HCT116 (cell line): ENCODE measurements at regions of chr1 and their contacts with region 1.

Region 1: DNA sequence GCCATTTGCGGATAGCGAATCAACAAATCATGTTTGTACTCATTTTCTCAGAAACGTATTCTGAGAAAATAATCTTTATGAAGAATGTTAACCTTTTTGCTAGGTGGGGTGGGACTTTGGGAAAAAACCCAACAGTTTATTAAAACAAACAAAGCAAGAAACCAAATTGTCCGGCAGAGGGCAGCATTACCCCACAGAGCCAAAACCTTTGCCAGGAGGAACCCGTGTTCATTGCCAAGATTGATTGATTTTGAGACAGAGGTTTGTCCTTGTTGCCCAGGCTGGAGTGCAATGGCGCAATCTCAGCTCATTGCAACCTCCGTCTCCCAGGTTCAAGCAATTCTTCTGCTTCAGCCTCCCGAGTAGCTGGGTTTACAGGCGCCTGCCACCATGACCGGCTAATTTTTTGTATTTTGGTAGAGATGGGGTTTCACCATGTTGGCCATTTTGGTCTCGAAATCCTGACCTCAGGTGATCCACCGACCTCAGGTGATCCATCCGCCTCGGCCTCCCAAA is 70.8 kb upstream of the RHOU start:
- DNase-seq: peak; percentile 85
- ATAC-seq: peak; percentile 75
- H3K4me3 ChIP-seq: peak overlapping the region; percentile 37 to 55
- H3K27ac ChIP-seq: peak overlapping the region; percentile 76; the same call in 1 of the 2 replicates
- H3K4me1 ChIP-seq: peaks cover 6 to 17% of the 10 kb centered on the region in 2 experiments; a peak in 3 of 4 replicates
- H3K27me3 ChIP-seq: no peaks in the 10 kb centered on the region
- CTCF ChIP-seq: peak; percentile 70 to 91 (median 79)
- POLR2A ChIP-seq: no peak
- RAD21 ChIP-seq: peak; percentile 98

Region 2: DNA sequence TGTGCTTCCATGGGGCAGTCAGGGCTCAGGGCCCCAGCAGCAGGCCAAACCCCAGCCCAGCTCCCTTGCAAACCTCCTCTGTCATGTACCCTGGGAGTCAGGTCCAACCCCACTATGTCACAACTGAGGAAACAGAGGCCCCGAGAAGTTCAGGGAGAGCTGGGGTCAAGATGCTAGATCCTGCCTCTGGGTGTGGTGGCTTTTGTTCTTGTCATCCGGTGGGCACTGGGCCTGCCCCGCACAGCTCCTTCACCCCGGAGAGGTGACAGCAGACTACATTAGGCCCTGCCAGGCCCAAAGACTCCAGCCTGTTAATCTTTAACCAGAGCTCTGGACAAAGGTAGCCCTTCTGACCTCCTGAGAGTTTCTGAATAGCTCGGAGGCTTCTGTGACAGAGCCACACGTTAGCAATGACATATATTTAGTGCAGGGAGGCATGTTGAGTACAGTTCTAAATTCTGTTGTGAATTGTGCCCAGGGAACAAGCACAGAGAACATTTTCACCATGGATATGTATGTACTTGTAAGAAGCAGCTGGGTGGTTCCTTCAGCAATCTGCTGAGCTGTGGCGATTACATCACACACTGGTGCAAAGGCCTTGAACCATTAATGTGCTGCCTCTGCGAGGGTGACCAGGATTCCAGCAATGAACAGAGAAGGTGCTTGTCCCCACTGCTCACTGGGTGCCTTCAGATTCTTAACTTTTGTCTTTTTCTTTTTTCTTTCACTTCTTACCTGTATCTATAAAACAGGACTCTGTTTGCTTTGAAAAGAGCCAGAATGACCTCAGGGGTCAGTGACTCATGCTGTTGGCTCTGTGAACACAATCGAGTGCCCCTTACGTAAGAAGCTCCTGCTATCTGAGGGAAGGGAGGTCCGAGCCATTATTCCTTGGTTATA is 173.6 kb after region 1 on chr1:
- CTCF ChIA-PET with region 1: no interaction called
- POLR2A ChIA-PET with region 1: no interaction called
- RAD21 ChIA-PET with region 1: no interaction called
- intact Hi-C with region 1: no loop called
- DNase-seq: peak; percentile 81
- ATAC-seq: peak; percentile 76
- H3K4me3 ChIP-seq: peak overlapping the region; percentile 1 to 32; a peak in 2 of 4 replicates
- H3K27ac ChIP-seq: peak overlapping the region; percentile 68
- H3K4me1 ChIP-seq: peaks cover 52 to 54% of the 10 kb centered on the region in 2 experiments
- H3K27me3 ChIP-seq: no peaks in the 10 kb centered on the region; the same call in 1 of the 2 replicates
- CTCF ChIP-seq: no peak
- POLR2A ChIP-seq: no peak
- RAD21 ChIP-seq: no peak

Region 3: GRCh38 chr1:229127301-229127700 is 462.8 kb after region 1 on chr1:
- CTCF ChIA-PET with region 1: no interaction called
- POLR2A ChIA-PET with region 1: no interaction called
- RAD21 ChIA-PET with region 1: no interaction called
- intact Hi-C with region 1: no loop called
- DNase-seq: no peak
- ATAC-seq: no peak
- H3K4me3 ChIP-seq: no peak overlapping the region
- H3K27ac ChIP-seq: no peak overlapping the region
- H3K4me1 ChIP-seq: peaks cover 0 to 5% of the 10 kb centered on the region in 2 experiments; a peak in 1 of 4 replicates
- H3K27me3 ChIP-seq: 0 out of 2 replicates have a peak, but pooled peaks cover 3% of the 10 kb centered on the region
- CTCF ChIP-seq: no peak
- POLR2A ChIP-seq: no peak
- RAD21 ChIP-seq: no peak

Region 4: DNA sequence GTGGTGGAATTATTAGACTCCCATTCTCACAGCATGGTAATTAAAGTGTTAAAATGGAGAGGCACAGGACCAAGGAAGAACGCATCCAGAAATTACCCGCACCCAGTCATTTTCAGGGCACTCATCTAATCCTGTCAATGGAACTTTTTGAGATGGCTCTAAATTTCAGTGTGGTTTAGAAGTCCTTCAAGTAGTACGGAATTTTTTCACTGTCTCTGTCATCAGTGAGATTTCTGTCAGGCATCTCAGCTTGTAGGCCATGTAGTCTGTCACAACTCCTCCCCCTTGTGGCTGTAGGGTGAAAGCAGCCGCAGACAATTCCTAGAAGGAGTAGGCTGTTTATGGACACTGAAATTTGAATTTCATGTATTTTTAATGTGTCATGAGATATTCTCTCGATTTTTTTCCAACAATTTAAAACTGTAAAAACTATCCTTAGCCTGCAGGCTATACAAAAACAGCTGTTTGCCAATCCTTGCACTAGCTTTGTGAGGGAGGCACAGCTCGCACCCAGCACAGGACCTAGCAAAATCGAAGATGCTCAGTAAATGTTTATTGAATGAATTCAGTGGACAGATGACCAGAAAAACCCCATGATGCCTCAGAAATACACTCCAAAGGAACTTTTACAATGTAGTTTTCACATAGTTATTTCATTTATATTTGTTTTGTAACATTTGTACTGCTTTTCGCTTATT is 850.3 kb after region 1 on chr1:
- CTCF ChIA-PET with region 1: no interaction called
- POLR2A ChIA-PET with region 1: no interaction called
- RAD21 ChIA-PET with region 1: no interaction called
- intact Hi-C with region 1: loop called (anchors 1 kb)
- DNase-seq: peak; percentile 45
- ATAC-seq: peak; percentile 97
- H3K4me3 ChIP-seq: no peak overlapping the region
- H3K27ac ChIP-seq: no peak overlapping the region
- H3K4me1 ChIP-seq: no peaks in the 10 kb centered on the region
- H3K27me3 ChIP-seq: no peaks in the 10 kb centered on the region
- CTCF ChIP-seq: peak; percentile 66 to 87 (median 83)
- POLR2A ChIP-seq: no peak
- RAD21 ChIP-seq: peak; percentile 70